CD14-positive monocyte (primary cell): ENCODE measurements at regions of chr1 and their contacts with region 1.

Region 1: DNA sequence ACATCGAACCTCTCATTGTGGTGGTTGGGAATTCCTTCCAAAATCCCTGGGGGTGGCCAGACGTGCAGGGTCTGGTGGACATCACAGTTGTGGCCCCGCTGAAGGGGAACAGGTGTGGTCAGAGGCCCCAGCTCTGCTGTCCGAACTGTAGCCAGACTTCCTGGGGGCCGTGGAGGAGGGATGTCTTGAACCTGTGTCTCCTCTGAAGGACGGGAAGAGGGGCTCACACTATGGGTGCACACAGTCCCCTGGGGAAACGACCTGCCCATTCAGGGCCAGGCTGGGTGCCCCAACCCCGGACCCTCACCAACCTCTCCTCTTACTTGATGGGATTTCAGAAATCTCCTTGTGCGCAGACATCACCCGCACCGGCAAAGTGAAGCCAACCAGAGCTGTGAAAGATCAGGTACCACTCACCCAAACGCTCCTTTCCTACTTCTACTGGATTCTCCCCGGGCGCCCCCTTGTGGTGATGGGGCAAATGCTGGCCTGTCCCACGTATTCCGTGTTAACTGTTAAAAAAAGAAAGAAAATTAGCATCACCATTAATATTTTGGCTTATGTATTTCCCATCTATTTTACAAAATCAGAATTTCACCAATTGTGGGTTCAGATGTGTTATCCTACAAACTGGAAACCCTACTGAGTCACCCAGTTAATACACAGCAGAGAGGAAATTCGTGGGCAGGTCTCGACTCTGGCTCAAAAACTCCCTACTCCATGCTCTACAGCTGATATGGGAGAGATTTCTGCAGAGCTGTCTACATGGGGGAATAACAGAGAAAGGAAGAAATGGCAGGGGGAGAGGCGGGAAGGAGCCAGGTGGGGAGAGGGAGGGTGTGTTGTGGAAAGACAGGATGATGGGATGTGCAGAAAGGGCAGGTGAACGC is 28.1 kb downstream of the PADI4 start:
- DNase-seq: peak; percentile 47 to 60 (median 58)
- H3K4me3 ChIP-seq: no peak overlapping the region
- H3K4me3 Mint-ChIP-seq: no peak overlapping the region
- H3K27ac ChIP-seq: no peak overlapping the region
- H3K27ac Mint-ChIP-seq: peak overlapping the region in 3 of 7 donors; percentile 26 to 60 (median 56)
- H3K4me1 ChIP-seq: no peaks in the 10 kb centered on the region
- H3K4me1 Mint-ChIP-seq: peaks cover 1% of the 10 kb centered on the region
- H3K27me3 ChIP-seq: no peaks in the 10 kb centered on the region
- H3K27me3 Mint-ChIP-seq: peaks cover 0 to 2% (median 1%) of the 10 kb centered on the region in 3 donors
- CTCF ChIP-seq: peak; percentile 90

Region 2: GRCh38 chr1:17066361-17067068 is 269.6 kb before region 1 on chr1:
- intact Hi-C with region 1: loop called in 1 of 2 experiments (anchors 2 kb)
- DNase-seq: peak; percentile 72 to 81 (median 75)
- H3K4me3 ChIP-seq: peak overlapping the region in 1 of 3 experiments; percentile 6
- H3K4me3 Mint-ChIP-seq: peak overlapping the region in 1 of 2 donors; percentile 86
- H3K27ac ChIP-seq: peak overlapping the region; percentile 83 to 84
- H3K27ac Mint-ChIP-seq: peak overlapping the region; percentile 95 to 99 (median 96)
- H3K4me1 ChIP-seq: peaks cover 72 to 79% of the 10 kb centered on the region in 2 donors
- H3K4me1 Mint-ChIP-seq: peaks cover 67% of the 10 kb centered on the region
- H3K27me3 ChIP-seq: no peaks in the 10 kb centered on the region
- H3K27me3 Mint-ChIP-seq: peaks cover 0 to 1% (median 0%) of the 10 kb centered on the region in 3 donors
- CTCF ChIP-seq: no peak

Region 3: GRCh38 chr1:17348125-17348979 is 12.3 kb after region 1 on chr1:
- intact Hi-C with region 1: no loop called
- DNase-seq: peak in 2 of 3 donors; percentile 7 to 23
- H3K4me3 ChIP-seq: no peak overlapping the region
- H3K4me3 Mint-ChIP-seq: no peak overlapping the region
- H3K27ac ChIP-seq: peak overlapping the region in 1 of 2 donors; percentile 22
- H3K27ac Mint-ChIP-seq: peak overlapping the region; percentile 3 to 79 (median 38)
- H3K4me1 ChIP-seq: peaks cover 0 to 8% of the 10 kb centered on the region in 2 donors
- H3K4me1 Mint-ChIP-seq: peaks cover 5% of the 10 kb centered on the region
- H3K27me3 ChIP-seq: no peaks in the 10 kb centered on the region
- H3K27me3 Mint-ChIP-seq: peaks cover 0 to 4% (median 1%) of the 10 kb centered on the region in 3 donors
- CTCF ChIP-seq: no peak